H1 (cell line): ENCODE measurements at regions of chr20 and their contacts with region 1.

Region 1: GRCh38 chr20:40797425-40797824 is 108.4 kb upstream of the MAFB start:
- DNase-seq: no peak
- H3K4me3 ChIP-seq: no peak overlapping the region
- H3K27ac ChIP-seq: no peak overlapping the region
- H3K4me1 ChIP-seq: no peaks in the 10 kb centered on the region
- H3K27me3 ChIP-seq: no peaks in the 10 kb centered on the region
- CTCF ChIP-seq: peak in 2 of 3 experiments; percentile 69 to 71; a peak in 3 of 4 replicates
- EP300 ChIP-seq: no peak
- POLR2A ChIP-seq: no peak
- RAD21 ChIP-seq: peak; percentile 64 to 69

Region 2: GRCh38 chr20:40668449-40669228 is 128.8 kb before region 1 on chr20:
- CTCF ChIA-PET with region 1: no interaction called
- POLR2A ChIA-PET with region 1: no interaction called
- DNase-seq: no peak
- H3K4me3 ChIP-seq: no peak overlapping the region
- H3K27ac ChIP-seq: no peak overlapping the region
- H3K4me1 ChIP-seq: peaks cover 0 to under 1% (median 0%) of the 10 kb centered on the region in 4 experiments; a peak in 1 of 7 replicates
- H3K27me3 ChIP-seq: no peaks in the 10 kb centered on the region; a peak in 1 of 7 replicates
- CTCF ChIP-seq: no peak
- EP300 ChIP-seq: no peak
- POLR2A ChIP-seq: no peak
- RAD21 ChIP-seq: no peak

Region 3: GRCh38 chr20:40757087-40757486 is 40.3 kb before region 1 on chr20:
- CTCF ChIA-PET with region 1: no interaction called
- POLR2A ChIA-PET with region 1: no interaction called
- DNase-seq: no peak
- H3K4me3 ChIP-seq: no peak overlapping the region
- H3K27ac ChIP-seq: no peak overlapping the region
- H3K4me1 ChIP-seq: peaks cover 0 to 4% (median 2%) of the 10 kb centered on the region in 4 experiments; a peak in 4 of 7 replicates
- H3K27me3 ChIP-seq: no peaks in the 10 kb centered on the region
- CTCF ChIP-seq: no peak
- EP300 ChIP-seq: no peak
- POLR2A ChIP-seq: no peak
- RAD21 ChIP-seq: no peak

Region 4: DNA sequence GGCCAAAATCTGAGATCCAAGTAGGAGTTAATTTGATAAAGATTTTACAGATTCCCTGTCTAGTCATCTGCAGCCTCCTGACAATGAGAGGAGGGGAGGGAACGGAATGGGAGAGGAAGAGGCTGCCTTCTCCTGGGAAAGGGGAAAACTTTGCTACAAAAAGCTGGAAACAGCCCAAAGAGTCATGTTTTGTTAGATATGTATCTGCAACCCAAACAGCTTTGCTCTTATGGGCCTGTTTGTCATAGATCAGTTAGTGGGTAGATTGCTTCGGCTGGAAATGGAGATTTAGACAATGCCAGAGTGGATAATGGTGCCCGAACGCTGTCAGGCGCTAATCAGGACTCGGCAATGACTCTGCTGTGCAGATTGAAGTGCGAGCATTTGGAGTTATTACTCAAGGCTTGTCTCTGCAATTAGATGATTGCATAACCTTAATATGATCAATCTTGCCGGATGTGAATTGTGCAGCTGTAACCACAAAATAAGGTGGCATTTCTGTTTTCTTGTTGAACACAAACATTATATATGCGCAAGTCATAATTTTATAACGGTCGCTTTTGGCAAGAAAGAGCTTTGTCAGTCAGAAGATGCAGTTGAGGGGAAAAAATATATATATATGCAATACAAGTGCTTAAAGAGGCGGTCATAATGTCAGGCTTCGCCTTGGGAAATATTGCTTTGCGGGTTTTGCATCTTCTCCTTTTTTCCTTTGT is 15.9 kb before region 1 on chr20:
- CTCF ChIA-PET with region 1: interaction called, 18 read pairs
- POLR2A ChIA-PET with region 1: no interaction called
- DNase-seq: no peak
- H3K4me3 ChIP-seq: no peak overlapping the region
- H3K27ac ChIP-seq: no peak overlapping the region
- H3K4me1 ChIP-seq: 0 out of 7 replicates have a peak, but pooled peaks cover 0 to 3% (median 0%) of the 10 kb centered on the region in 4 experiments
- H3K27me3 ChIP-seq: no peaks in the 10 kb centered on the region; a peak in 1 of 7 replicates
- CTCF ChIP-seq: no peak
- EP300 ChIP-seq: no peak
- POLR2A ChIP-seq: no peak
- RAD21 ChIP-seq: no peak

Region 5: DNA sequence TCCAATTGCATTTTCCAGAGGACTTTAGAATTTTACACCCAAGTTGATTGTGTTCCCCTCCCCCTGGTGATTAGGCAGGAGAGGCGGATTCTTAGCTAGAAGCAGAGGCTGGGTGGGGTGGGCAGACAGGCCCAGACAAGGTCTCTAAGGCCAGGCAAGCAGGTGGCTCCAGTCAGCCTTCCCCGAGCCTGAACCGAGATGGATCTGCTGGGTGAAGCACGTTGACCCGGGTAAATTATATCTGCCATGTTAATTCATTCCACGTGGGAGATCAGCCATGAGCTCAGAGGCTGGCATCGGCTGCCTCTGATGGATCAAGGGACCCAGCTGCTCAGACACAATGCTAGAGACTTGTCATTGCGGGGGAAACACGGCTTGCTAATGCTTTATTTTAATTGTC is 51.1 kb after region 1 on chr20:
- CTCF ChIA-PET with region 1: interaction called, 15 read pairs
- POLR2A ChIA-PET with region 1: no interaction called
- DNase-seq: no peak
- H3K4me3 ChIP-seq: no peak overlapping the region
- H3K27ac ChIP-seq: no peak overlapping the region
- H3K4me1 ChIP-seq: no peaks in the 10 kb centered on the region; a peak in 1 of 7 replicates
- H3K27me3 ChIP-seq: no peaks in the 10 kb centered on the region
- CTCF ChIP-seq: no peak
- EP300 ChIP-seq: no peak
- POLR2A ChIP-seq: no peak
- RAD21 ChIP-seq: no peak

Region 6: DNA sequence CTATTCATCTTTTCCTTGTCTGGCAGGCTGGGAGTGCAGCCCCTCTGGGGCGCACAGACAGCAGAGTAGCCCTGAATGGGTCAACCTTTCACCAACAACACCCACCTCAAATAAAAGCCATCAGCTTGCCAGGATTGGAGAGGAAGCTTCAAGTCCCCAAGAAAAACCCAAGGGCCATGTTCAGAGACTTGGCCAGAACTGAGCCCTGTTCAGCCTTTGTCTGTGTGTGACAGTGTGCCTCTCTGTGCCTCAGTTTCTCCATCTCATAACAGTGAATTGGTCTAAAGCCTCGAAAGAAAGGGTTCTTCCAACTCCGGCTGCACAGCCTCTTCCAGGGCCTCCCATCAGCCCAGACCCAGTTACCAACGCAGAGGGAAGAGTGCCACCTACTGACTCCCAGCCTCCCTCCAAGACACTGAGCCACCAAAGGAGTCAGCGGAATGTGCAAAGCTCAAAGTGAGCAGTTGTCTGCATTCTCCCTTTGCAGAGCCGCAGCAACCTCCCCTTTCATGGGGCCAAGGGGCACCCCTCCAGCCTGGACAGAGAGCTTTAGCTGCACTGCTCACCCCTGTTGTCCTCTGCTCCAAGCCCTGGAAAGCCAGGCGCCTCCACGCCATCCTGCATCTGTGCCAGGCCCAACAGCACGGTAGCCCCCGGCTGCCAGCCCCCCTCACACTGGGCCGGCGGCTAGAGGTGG is 148.5 kb after region 1 on chr20:
- CTCF ChIA-PET with region 1: interaction called, 50 read pairs
- POLR2A ChIA-PET with region 1: no interaction called
- DNase-seq: peak; percentile 36 to 76
- H3K4me3 ChIP-seq: no peak overlapping the region
- H3K27ac ChIP-seq: no peak overlapping the region
- H3K4me1 ChIP-seq: peaks cover 0 to 3% (median 2%) of the 10 kb centered on the region in 4 experiments; a peak in 3 of 7 replicates
- H3K27me3 ChIP-seq: no peaks in the 10 kb centered on the region; a peak in 2 of 7 replicates
- CTCF ChIP-seq: peak; percentile 86 to 98 (median 90)
- EP300 ChIP-seq: no peak
- POLR2A ChIP-seq: no peak
- RAD21 ChIP-seq: peak; percentile 96 to 97

Region 7: GRCh38 chr20:40962730-40963504 is 165.5 kb after region 1 on chr20:
- CTCF ChIA-PET with region 1: interaction called, 15 read pairs
- POLR2A ChIA-PET with region 1: no interaction called
- DNase-seq: peak; percentile 33 to 91
- H3K4me3 ChIP-seq: no peak overlapping the region
- H3K27ac ChIP-seq: no peak overlapping the region
- H3K4me1 ChIP-seq: no peaks in the 10 kb centered on the region; a peak in 1 of 7 replicates
- H3K27me3 ChIP-seq: no peaks in the 10 kb centered on the region
- CTCF ChIP-seq: peak; percentile 77 to 86 (median 78)
- EP300 ChIP-seq: no peak
- POLR2A ChIP-seq: no peak
- RAD21 ChIP-seq: peak; percentile 92 to 96